ENCODE measurements at regions of chr13 and their contacts with region 1.

Region 1: GRCh38 chr13:80363890-80364503 is 23.1 kb upstream of the SPRY2 start:
- DNase-seq: no peak
- H3K4me3 ChIP-seq: peak overlapping the region; percentile 16; the same call in 1 of the 2 replicates
- H3K27ac ChIP-seq: no peak overlapping the region
- H3K4me1 ChIP-seq: no peaks in the 10 kb centered on the region
- H3K27me3 ChIP-seq: no peaks in the 10 kb centered on the region
- CTCF ChIP-seq: peak; percentile 79

Region 2: GRCh38 chr13:79679334-79679733 is 684.7 kb before region 1 on chr13:
- CTCF ChIA-PET with region 1: no interaction called
- POLR2A ChIA-PET with region 1: no interaction called
- intact Hi-C with region 1: loop called (anchors 1 kb)
- DNase-seq: peak; percentile 38 to 45
- H3K4me3 ChIP-seq: no peak overlapping the region
- H3K27ac ChIP-seq: no peak overlapping the region
- H3K4me1 ChIP-seq: peaks cover 16% of the 10 kb centered on the region
- H3K27me3 ChIP-seq: no peaks in the 10 kb centered on the region
- CTCF ChIP-seq: peak; percentile 88

Region 3: DNA sequence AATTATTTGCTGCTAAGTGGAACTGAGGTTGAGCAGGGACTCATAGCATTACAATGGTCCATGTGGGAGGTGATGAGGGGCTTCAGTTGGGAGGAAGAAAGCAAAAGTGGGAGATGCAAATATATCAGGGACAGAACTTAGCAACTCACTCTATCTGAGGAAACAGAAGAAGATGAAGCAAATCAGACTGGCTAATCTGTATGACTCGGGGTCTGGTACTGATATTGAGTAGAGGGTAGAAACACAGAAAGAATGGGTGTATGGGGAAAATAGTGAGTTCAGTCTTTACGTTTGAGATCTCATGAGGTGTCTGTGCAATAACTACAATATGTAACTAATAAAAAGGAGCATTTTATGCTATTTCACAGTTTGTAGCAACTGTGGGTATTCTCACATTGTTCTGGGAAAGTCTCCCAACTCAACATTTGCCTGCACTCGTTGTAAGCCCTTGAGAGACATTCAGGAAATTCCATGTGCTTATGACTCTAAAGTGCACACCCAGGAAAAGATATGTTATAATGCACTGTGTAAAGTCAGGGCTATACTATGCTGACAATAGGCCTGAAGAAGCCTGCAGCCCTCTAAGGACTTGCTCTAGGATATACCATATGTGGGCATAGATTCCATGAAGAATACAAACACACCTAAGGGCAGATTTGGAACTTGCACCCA is 206.6 kb before region 1 on chr13:
- CTCF ChIA-PET with region 1: no interaction called
- POLR2A ChIA-PET with region 1: no interaction called
- intact Hi-C with region 1: no loop called
- DNase-seq: no peak
- H3K4me3 ChIP-seq: no peak overlapping the region
- H3K27ac ChIP-seq: no peak overlapping the region
- H3K4me1 ChIP-seq: no peaks in the 10 kb centered on the region
- H3K27me3 ChIP-seq: no peaks in the 10 kb centered on the region
- CTCF ChIP-seq: no peak

Region 4: DNA sequence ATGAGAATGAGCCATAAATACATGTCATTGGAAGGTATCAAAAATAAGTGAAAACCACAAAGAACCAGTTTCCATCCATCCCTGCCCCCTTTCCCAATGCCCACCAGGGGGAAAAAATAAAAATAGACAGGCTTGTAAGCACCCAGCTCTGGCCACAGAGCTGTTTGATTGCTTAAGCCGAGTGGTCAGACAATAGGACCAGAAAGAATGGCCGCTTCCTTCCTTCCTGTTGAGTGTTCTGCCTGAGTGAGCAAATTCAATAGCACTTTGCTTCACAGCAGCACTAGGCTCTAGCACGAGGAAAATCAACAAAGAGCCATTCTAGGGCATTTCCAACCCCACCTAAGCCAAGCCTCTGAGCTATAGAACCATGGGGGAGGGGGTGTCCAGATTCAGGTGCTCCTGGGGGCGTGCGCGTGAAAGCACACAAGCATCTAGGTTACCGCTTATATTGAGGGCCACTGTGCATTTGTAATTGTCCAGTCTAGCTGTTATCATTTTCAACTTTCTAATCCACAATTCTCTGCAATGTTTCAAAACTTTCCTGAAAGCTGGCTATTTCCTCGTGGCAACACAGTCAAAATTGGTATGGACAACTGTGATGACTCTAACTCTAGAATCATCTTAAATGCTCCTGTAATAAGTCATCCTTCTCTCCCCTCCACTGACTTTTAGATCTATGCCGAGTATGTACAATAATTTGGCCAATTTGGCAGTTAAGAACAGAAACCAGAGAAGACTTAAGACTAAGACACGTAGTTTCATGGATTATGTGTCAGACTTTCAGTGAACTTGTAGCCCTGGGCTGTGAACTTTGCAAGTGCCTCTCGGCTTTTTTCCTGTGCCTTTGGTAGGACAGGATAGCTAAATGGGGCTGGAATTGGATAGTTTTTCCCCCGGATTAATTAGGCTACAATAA is 87.4 kb before region 1 on chr13:
- CTCF ChIA-PET with region 1: no interaction called
- POLR2A ChIA-PET with region 1: no interaction called
- intact Hi-C with region 1: no loop called
- DNase-seq: peak; percentile 31 to 52
- H3K4me3 ChIP-seq: no peak overlapping the region
- H3K27ac ChIP-seq: no peak overlapping the region
- H3K4me1 ChIP-seq: peaks cover 14% of the 10 kb centered on the region
- H3K27me3 ChIP-seq: no peaks in the 10 kb centered on the region
- CTCF ChIP-seq: no peak

Region 5: DNA sequence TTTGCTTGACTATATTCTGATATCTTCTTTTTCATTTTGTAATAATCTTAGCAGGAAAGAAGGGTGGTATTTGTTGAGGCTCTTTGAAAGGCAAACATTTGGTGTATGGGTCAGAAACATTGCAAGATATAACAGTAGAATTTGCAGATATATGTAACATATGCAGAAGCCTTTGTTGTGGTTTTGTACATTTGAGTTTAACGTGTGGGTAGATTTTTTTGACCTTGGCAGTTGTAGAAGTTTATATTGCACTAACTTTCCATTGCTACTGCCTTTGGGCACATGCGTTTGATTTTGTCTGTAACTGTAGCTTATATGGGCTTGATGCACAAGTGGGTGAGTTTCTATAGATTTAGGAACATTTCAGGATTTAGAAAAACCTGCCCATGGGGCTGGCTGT is 55.4 kb after region 1 on chr13:
- CTCF ChIA-PET with region 1: interaction called, 20 read pairs
- POLR2A ChIA-PET with region 1: no interaction called
- intact Hi-C with region 1: no loop called
- DNase-seq: no peak
- H3K4me3 ChIP-seq: no peak overlapping the region
- H3K27ac ChIP-seq: no peak overlapping the region
- H3K4me1 ChIP-seq: no peaks in the 10 kb centered on the region
- H3K27me3 ChIP-seq: no peaks in the 10 kb centered on the region
- CTCF ChIP-seq: no peak